ENCODE measurements at regions of chr3 and their contacts with region 1.

Region 1: GRCh38 chr3:48663415-48664312 is 978 bp upstream of the CELSR3 start:
- DNase-seq: peak; percentile 94
- H3K4me3 Mint-ChIP-seq: peak overlapping the region; percentile 84
- H3K27ac Mint-ChIP-seq: peak overlapping the region; percentile 61
- H3K4me1 Mint-ChIP-seq: peaks cover 17% of the 10 kb centered on the region
- H3K27me3 Mint-ChIP-seq: peaks cover 35% of the 10 kb centered on the region

Region 2: GRCh38 chr3:48446425-48447193 is 217.1 kb before region 1 on chr3 and contains the start of gene ATRIP:
- CTCF ChIA-PET with region 1: no interaction called
- intact Hi-C with region 1: loop called (anchors 5 kb)
- DNase-seq: peak; percentile 88
- H3K4me3 Mint-ChIP-seq: peak within 1 kb of the TSS; percentile 87
- H3K27ac Mint-ChIP-seq: peak within 1 kb of the TSS; percentile 77
- H3K4me1 Mint-ChIP-seq: peaks cover 41% of the 10 kb centered on the region
- H3K27me3 Mint-ChIP-seq: no peaks in the 10 kb centered on the region
- total RNA-seq, gene ATRIP: 8.9 to 10.0 TPM

Region 3: GRCh38 chr3:48685602-48686511 is 22.2 kb after region 1 on chr3 and contains the start of gene NCKIPSD:
- CTCF ChIA-PET with region 1: interaction called, 4 read pairs
- intact Hi-C with region 1: loop called (anchors 1 kb)
- DNase-seq: peak; percentile 91
- H3K4me3 Mint-ChIP-seq: peak within 1 kb of the TSS; percentile 83
- H3K27ac Mint-ChIP-seq: peak within 1 kb of the TSS; percentile 73
- H3K4me1 Mint-ChIP-seq: peaks cover 25% of the 10 kb centered on the region
- H3K27me3 Mint-ChIP-seq: no peaks in the 10 kb centered on the region
- total RNA-seq, gene NCKIPSD: 27.3 to 28.7 TPM

Region 4: DNA sequence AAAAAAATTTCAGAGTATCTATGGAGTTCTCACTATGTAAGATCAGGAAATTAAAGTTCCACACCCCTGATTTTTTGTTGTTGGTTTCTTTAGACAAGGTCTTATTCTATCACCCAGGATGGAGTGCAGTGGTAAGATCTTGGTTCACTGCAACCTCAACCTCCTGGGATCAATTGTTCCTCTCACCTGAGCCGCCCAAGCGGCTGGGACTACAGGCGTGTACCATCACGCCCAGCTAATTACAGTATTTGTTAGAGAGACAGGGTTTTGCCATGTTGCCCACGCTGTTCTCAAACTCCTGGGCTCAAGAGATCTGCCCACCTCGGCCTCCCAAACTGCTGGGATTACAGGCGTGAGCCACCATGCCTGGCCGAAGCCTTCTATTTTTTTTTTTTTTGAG is 417.8 kb after region 1 on chr3:
- CTCF ChIA-PET with region 1: no interaction called
- intact Hi-C with region 1: no loop called
- DNase-seq: no peak
- H3K4me3 Mint-ChIP-seq: no peak overlapping the region
- H3K27ac Mint-ChIP-seq: no peak overlapping the region
- H3K4me1 Mint-ChIP-seq: peaks cover 9% of the 10 kb centered on the region
- H3K27me3 Mint-ChIP-seq: no peaks in the 10 kb centered on the region

Measured in activated naive CD4-positive, alpha-beta T cell treated with anti-CD3 and anti-CD28 coated beads for 36 hours (primary cell).